Heart right ventricle (tissue), 16 donors: ENCODE measurements at regions of chr22 and their contacts with region 1.

Region 1: DNA sequence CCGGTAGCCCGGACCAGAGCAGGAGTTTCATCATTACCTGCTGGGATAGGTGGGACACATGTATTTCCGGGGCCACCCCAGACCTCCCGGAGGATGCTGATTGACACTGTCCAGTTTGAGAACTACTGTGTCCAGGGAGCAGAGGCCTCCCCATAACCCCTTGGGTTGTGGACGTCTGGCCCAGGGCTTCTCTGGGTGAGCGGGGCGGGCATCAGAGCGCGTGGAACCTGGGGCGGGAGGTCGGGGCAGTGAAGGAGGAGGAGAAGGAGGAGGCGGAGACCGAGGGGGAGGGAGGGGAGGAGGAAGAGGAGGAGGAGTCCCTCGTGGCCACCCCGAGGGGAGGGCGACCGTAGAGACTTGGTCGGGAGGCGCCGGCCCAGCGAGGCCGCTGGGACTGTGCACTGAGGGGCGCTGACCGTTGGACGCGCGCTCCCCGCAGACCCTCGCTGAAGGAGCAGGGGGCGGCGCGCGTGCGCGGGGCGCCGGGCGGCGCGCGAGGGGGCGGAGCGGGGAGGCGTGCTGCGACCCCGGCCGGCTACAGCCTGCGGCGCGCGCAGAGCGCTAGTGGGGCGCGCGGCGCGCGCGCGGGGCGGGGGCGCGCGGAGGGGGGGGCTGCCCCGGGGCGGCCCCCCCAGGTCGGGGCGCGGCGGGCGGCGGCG is at the start of gene GRK3:
- DNase-seq: peak; percentile 67 to 74
- ATAC-seq: peak; percentile 74 to 92 (median 86)
- H3K4me3 ChIP-seq: peak within 1 kb of the TSS; percentile 64 to 95 (median 89)
- H3K27ac ChIP-seq: peak within 1 kb of the TSS in 8 of 10 donors; percentile 15 to 91 (median 60)
- H3K4me1 ChIP-seq: peaks cover 0 to 51% (median 28%) of the 10 kb centered on the region in 9 donors
- H3K27me3 ChIP-seq: peaks cover 0 to 8% (median 0%) of the 10 kb centered on the region in 7 donors
- CTCF ChIP-seq: no peak
- total RNA-seq, gene GRK3: 3.1 to 9.0 (median 5.5) TPM

Region 2: DNA sequence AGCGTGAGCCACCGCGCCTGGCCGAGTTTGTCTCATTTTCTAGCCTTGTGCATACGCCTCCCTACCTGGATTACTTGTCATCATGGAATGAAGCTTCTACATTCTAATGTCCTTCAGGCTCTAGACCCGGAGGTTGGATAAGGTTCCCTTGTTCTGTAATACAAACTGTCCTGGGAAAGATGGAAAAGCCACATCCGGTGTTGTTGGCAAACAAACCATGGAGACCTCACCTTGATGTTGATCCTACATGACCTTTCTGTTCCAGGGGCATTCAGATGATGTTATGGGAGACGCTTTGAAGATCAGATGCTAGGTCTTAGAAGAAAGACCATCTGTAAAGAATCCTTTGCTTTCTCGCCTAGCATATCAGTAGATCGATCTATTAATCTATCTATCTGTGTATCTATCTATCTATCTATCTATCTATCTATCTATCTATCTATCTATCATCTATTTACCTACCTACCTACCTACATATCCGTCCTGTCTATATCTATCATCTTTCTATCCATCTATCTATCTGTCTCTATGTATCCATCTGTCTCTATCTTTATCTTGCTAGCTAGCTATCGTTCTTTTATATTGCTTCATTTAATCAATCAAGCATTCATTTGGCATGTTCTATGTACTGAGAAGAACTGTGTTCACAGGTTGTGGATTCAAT is 46.3 kb before region 1 on chr22:
- intact Hi-C with region 1: loop called in 1 of 10 experiments (anchors 1 kb)
- DNase-seq: no peak
- ATAC-seq: no peak
- H3K4me3 ChIP-seq: no peak overlapping the region
- H3K27ac ChIP-seq: no peak overlapping the region
- H3K4me1 ChIP-seq: no peaks in the 10 kb centered on the region
- H3K27me3 ChIP-seq: no peaks in the 10 kb centered on the region
- CTCF ChIP-seq: no peak

Region 3: GRCh38 chr22:25666308-25666707 is 101.9 kb after region 1 on chr22:
- intact Hi-C with region 1: loop called in 1 of 10 experiments (anchors 10 kb)
- DNase-seq: peak; percentile 52 to 63
- ATAC-seq: peak; percentile 60 to 87 (median 68)
- H3K4me3 ChIP-seq: peak overlapping the region in 5 of 10 donors; percentile 3 to 20 (median 12)
- H3K27ac ChIP-seq: peak overlapping the region in 7 of 10 donors; percentile 5 to 74 (median 35)
- H3K4me1 ChIP-seq: peaks cover 0 to 52% (median 20%) of the 10 kb centered on the region in 9 donors
- H3K27me3 ChIP-seq: no peaks in the 10 kb centered on the region
- CTCF ChIP-seq: peak in 1 of 9 donors; percentile 16

Region 4: GRCh38 chr22:25696763-25697667 is 132.6 kb after region 1 on chr22:
- intact Hi-C with region 1: loop called in 4 of 10 experiments (anchors 5 to 10 kb)
- DNase-seq: no peak
- ATAC-seq: no peak
- H3K4me3 ChIP-seq: no peak overlapping the region
- H3K27ac ChIP-seq: no peak overlapping the region
- H3K4me1 ChIP-seq: peaks cover 0 to 29% (median 24%) of the 10 kb centered on the region in 9 donors
- H3K27me3 ChIP-seq: no peaks in the 10 kb centered on the region
- CTCF ChIP-seq: no peak

Region 5: GRCh38 chr22:25702040-25702439 is 137.6 kb after region 1 on chr22:
- intact Hi-C with region 1: loop called in 3 of 10 experiments (anchors 5 to 10 kb)
- DNase-seq: no peak
- ATAC-seq: peak in 5 of 8 donors; percentile 46 to 76 (median 53)
- H3K4me3 ChIP-seq: no peak overlapping the region
- H3K27ac ChIP-seq: peak overlapping the region in 2 of 10 donors; percentile 37 to 51
- H3K4me1 ChIP-seq: peaks cover 0 to 31% (median 16%) of the 10 kb centered on the region in 9 donors
- H3K27me3 ChIP-seq: no peaks in the 10 kb centered on the region
- CTCF ChIP-seq: peak in 8 of 9 donors; percentile 23 to 70 (median 52)